GM12878 (cell line): ENCODE measurements at regions of chr2 and their contacts with region 1.

Region 1: DNA sequence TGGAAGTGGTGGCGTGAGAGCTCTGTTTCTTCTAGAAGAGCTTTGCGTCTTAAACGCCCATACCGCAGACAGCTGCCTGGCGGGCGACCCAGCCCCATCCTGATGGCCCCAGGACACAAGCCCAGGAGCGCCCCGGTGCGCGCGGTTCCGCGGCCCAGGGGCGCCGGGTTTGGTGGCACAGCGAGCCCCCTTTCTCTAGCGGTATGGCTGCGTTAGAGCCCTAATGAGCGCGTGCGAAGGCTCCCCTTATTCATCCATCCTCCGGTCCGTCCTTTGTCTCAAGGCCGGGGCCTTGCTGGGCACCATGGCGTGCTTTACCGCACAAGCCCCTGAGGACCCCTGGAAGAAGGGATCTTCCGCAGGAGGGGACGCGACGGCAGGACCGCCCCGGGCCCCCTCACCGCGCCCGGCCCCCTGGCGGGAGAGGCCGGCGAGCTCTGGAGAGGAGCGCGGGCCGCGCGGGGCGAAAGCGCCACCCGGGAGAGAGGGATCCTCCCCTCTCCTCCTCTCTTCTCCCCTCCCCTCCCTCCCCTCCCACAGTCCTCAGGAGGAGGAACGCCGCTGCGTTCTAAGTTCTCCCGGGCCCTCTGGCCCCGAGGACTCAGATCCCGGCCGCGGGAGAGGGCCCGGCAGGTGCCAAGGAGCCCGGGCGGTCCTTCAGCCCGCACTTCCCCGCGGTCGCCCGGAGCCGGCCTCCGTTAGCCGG is 626 bp upstream of the SLC1A4 start:
- DNase-seq: no peak
- ATAC-seq: peak; percentile 46
- H3K4me3 ChIP-seq: peak overlapping the region; percentile 99
- H3K27ac ChIP-seq: peak overlapping the region; percentile 89
- H3K4me1 ChIP-seq: peaks cover 28% of the 10 kb centered on the region
- H3K27me3 ChIP-seq: no peaks in the 10 kb centered on the region
- CTCF ChIP-seq: peak; percentile 18 to 33 (median 20); a peak in 3 of 6 replicates
- EP300 ChIP-seq: peak; percentile 53 to 84; a peak in 3 of 4 replicates
- POLR2A ChIP-seq: peak; percentile 59
- RAD21 ChIP-seq: no peak

Region 2: DNA sequence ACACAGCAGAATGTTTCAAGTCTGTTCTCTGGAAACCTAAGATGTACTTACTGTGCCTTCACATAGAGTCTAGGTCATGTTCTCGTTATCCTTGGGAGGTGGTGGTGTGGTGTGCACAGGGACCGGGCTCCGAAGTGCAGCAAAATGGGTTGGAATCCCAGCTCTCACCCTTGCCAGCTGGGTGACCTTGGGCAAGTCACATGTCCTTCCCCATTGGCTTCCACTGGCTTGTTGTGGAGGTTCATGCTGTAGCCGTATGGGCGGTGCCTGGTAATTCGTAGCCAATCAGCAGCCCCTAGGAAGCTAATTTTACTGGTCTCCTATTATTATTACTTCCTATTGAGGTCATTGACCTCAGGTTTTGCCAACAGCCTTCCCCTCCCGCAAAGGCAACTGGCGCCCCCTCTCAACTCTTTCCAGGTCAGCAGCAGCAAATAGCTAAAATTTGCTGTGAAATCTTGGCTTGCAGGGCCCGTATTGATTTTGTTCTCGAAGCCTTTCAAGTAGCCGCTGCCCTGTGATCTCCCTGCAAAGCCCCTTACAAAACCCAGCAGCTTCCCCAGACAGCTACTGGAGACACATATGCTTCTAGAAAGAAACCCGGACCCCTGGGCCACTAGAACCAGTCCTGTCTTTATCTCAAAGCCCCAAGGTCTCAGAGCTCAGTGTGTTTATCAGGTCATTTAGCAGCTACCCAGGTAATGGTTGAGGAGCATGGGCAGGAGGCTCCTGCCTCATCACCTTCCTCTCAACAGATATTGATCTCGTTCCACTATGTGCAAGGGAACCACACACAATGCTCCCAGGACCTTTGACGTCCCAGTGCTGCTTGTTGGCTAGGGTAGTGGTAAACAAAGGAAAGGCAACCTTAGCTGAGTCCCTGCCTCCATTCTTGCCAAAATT is 65.8 kb before region 1 on chr2:
- CTCF ChIA-PET with region 1: interaction called, 8 read pairs
- POLR2A ChIA-PET with region 1: interaction called, 4 read pairs
- RAD21 ChIA-PET with region 1: interaction called, 40 read pairs
- SMC1A ChIA-PET with region 1: interaction called, 17 read pairs
- in situ Hi-C with region 1: no loop called
- intact Hi-C with region 1: loop called (anchors 1 kb)
- DNase-seq: no peak
- ATAC-seq: no peak
- H3K4me3 ChIP-seq: peak overlapping the region; percentile 23; the same call in 1 of the 2 replicates
- H3K27ac ChIP-seq: peak overlapping the region; percentile 23; the same call in 1 of the 2 replicates
- H3K4me1 ChIP-seq: peaks cover 42% of the 10 kb centered on the region
- H3K27me3 ChIP-seq: no peaks in the 10 kb centered on the region
- CTCF ChIP-seq: no peak
- EP300 ChIP-seq: no peak
- POLR2A ChIP-seq: no peak
- RAD21 ChIP-seq: peak; percentile 30; the same call in 1 of the 2 replicates

Region 3: GRCh38 chr2:64932371-64933216 is 56.0 kb before region 1 on chr2:
- CTCF ChIA-PET with region 1: interaction called, 4 read pairs
- POLR2A ChIA-PET with region 1: interaction called, 96 read pairs
- RAD21 ChIA-PET with region 1: interaction called, 73 read pairs
- SMC1A ChIA-PET with region 1: interaction called, 17 read pairs
- in situ Hi-C with region 1: loop called (anchors 10 kb)
- intact Hi-C with region 1: loop called (anchors 1 kb)
- DNase-seq: peak; percentile 98
- ATAC-seq: peak; percentile 81
- H3K4me3 ChIP-seq: peak overlapping the region; percentile 96
- H3K27ac ChIP-seq: peak overlapping the region; percentile 95
- H3K4me1 ChIP-seq: peaks cover 28% of the 10 kb centered on the region
- H3K27me3 ChIP-seq: no peaks in the 10 kb centered on the region
- CTCF ChIP-seq: no peak
- EP300 ChIP-seq: peak; percentile 62 to 83; a peak in 3 of 4 replicates
- POLR2A ChIP-seq: peak; percentile 84
- RAD21 ChIP-seq: 0 out of 2 replicates have a peak, but pooled peaks have one; percentile 1

Region 4: GRCh38 chr2:65227425-65228262 is 239.1 kb after region 1 on chr2 and contains the start of gene ACTR2:
- CTCF ChIA-PET with region 1: no interaction called
- POLR2A ChIA-PET with region 1: interaction called, 5 read pairs
- RAD21 ChIA-PET with region 1: no interaction called
- SMC1A ChIA-PET with region 1: no interaction called
- in situ Hi-C with region 1: no loop called
- intact Hi-C with region 1: loop called (anchors 5 kb)
- DNase-seq: peak; percentile 90
- ATAC-seq: peak; percentile 92
- H3K4me3 ChIP-seq: peak within 1 kb of the TSS; percentile 97
- H3K27ac ChIP-seq: peak within 1 kb of the TSS; percentile 98
- H3K4me1 ChIP-seq: peaks cover 12% of the 10 kb centered on the region
- H3K27me3 ChIP-seq: no peaks in the 10 kb centered on the region
- CTCF ChIP-seq: no peak
- EP300 ChIP-seq: 0 out of 4 replicates have a peak, but pooled peaks of 1 of the 2 experiments have one; percentile 22
- POLR2A ChIP-seq: peak; percentile 98
- RAD21 ChIP-seq: no peak
- polyA plus RNA-seq, gene ACTR2: 94.2 to 124 TPM